Posterior vena cava (tissue), 2 donors: ENCODE measurements at regions of chr7 and their contacts with region 1.

Region 1: DNA sequence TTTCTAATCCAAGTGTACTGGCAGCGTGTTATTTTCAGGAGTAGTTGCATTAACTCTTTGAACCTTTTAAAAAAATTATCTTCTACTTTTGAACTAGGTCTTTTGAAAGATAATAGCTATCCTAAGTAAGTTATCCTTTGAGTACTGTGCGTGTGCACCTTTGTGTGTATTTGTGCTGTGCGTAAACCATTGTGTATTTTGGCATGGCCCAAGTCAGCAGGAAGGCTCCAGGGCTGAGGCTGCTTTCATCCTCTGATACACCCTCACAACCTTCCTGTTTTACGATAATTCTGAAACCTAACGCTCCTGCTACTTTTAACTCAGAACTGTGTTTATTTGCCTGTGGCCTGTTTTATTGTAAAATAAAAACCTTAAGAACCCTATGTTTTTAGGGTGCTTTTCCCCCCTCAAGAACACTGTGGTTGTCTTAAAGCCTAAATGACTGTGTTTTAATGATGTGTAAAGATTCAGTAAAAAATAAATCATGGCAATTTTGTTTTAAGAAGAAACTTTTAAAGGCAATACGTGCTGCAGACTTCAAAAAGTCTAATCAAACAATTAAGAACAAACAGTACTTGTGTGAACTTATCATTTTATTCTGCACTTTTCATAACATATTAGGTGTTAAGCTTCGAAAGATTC is 57.5 kb downstream of the HDAC9 start:
- DNase-seq: no peak

Region 2: DNA sequence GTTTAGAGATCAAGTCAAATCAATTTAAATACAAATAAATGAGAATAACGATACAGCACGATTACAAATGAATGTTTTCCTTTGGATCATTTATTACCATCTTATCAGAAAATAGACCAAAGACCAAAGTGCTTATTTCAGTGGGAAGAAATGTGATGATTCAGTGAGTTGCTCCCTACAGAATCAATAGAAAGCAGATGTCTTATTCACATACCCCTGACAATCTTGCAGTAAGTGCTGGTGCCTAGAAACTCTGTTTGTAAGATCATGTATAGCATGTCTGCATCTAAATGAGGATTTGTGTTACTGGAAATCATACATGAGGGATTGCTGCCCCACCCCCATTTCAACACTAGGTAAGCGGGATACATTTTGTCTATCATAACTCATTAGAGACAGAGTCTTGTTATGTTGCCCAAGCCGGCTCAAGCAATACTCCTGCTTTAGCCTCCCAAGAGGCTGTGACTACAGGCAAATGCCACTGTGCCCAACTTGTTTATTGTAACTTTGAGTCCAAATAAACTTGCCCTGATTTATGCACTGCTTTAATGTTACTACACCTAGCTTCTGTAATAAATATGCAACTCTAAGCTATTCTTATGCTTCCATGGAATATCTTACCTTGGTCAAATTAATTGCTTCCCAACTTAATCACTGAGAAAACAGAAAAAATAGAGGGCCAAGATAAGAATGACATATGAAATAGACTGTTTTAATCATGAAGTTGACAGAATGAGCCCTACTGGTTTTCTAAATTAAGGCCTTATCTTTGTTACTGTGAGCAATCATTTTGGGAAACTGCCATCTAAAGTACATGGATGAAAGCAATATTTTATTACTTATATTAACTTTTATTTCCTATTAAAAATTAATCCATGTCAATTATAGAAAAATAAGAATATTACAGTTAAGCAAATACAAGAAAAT is 1172.1 kb before region 1 on chr7:
- intact Hi-C with region 1: loop called in 1 of 2 experiments (anchors 5 kb)
- DNase-seq: no peak

Region 3: GRCh38 chr7:18508443-18509427 is 44.3 kb before region 1 on chr7:
- intact Hi-C with region 1: loop called in 1 of 2 experiments (anchors 10 kb)
- DNase-seq: no peak